ENCODE measurements at regions of chr18 and their contacts with region 1.

Region 1: GRCh38 chr18:70454704-70455322 is 166.0 kb downstream of the SOCS6 start:
- DNase-seq: peak; percentile 24
- H3K4me3 ChIP-seq: no peak overlapping the region
- CTCF ChIP-seq: peak; percentile 69

Region 2: DNA sequence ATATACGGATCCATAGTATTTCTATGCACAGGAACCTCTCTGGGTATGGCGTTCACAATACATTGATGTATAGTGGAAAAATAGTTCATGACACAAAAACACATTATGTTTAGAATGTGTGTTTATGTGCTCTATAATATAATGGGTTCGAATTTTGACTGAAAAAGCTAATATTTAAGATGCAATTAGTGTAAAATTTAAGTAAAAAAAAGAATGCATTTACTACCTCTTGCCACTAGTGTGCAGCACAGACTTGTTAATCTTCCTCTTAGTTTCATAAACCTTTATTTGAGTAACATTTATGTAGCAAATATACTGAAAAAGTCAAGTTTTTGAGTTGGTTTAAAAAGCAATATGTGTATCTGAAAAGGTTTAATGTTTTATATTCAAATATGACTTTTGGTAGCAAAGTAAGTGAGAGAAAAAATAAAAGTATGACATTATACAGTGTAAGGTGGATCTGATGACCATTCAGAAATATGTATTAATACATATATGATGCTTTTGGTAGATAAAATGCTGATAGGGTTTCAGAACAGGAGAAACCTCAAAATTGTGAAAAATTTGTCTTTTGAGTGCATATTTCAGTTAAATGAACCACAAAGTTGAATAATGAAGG is 1607.5 kb before region 1 on chr18:
- CTCF ChIA-PET with region 1: interaction called, 12 read pairs
- POLR2A ChIA-PET with region 1: no interaction called
- DNase-seq: no peak
- H3K4me3 ChIP-seq: no peak overlapping the region
- CTCF ChIP-seq: peak; percentile 47

Region 3: DNA sequence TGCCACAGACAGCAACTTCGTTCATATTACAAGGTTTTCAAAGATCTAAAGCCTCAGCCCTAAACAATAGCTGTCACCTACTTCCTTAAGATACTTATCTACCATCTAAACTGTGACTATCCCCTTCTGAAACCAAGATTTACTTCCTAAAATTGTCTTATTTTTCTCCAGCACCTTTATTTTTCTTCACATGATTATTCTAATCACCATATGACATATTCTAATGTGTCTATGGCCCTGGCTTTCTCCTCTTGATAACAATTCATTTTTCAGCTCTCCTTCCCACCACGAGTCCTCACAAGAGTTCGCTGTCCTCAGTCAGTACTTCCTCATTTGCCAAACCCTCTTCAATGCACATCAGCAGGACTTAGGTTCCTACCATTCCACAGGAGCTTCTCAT is 303.2 kb before region 1 on chr18:
- CTCF ChIA-PET with region 1: interaction called, 13 read pairs
- POLR2A ChIA-PET with region 1: no interaction called
- DNase-seq: no peak
- H3K4me3 ChIP-seq: no peak overlapping the region
- CTCF ChIP-seq: no peak

Region 4: DNA sequence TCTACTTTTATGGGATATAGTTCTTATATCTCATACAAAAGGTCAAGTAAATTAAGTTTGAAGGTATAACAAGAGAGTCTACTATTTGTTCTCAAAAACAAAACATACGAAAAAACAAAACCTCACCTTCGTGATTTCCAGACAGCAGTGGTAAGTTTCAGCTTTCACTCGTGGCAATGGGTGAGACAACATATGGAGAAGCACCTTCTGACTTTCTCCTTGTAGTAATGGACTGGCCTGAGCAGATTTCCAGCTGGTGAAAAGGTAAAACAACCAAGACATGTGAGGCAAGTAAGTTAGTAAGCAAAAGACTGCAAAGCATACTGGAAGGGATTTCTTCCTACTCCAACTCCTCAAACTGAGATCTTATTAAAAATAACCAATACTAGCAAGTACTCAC is 288.9 kb before region 1 on chr18:
- CTCF ChIA-PET with region 1: interaction called, 218 read pairs
- POLR2A ChIA-PET with region 1: no interaction called
- DNase-seq: no peak
- H3K4me3 ChIP-seq: no peak overlapping the region
- CTCF ChIP-seq: no peak

Region 5: DNA sequence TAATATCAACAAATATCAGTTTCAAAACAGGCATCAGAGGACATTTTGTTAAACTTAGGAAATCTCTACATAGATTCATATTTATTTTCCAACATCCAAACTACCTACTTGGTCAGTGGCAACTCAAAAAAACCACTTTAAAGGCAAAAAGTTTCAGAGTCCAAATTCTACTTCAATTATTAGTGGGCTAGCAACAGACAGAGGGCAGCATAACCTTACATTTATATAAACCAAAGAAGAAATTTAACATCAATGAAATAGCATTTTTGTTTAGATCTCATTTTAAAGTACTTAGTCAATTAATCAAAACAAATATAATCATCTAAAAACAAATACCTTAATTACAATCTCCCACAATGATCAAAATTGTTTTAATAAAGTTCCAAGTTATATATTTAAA is 282.6 kb before region 1 on chr18:
- CTCF ChIA-PET with region 1: interaction called, 218 read pairs
- POLR2A ChIA-PET with region 1: no interaction called
- DNase-seq: no peak
- H3K4me3 ChIP-seq: no peak overlapping the region
- CTCF ChIP-seq: peak; percentile 30

Region 6: DNA sequence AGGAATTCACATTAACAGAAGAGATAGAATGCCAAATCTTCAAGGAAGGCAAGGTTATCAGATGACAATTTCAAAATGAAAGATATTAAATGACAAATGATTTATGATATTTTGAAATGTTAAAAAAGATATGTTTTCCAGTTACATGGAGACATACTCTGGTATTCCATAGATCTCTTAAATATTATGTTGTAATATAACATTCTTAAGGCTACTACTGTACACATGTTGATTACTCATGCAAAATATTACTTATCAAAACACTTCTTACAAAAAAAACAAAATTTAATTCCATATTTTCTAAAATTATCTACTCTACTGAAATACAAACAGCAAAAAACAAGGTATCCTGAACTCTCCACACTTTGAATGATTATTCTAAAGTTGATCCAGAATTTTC is 272.3 kb before region 1 on chr18:
- CTCF ChIA-PET with region 1: interaction called, 432 read pairs
- POLR2A ChIA-PET with region 1: no interaction called
- DNase-seq: no peak
- H3K4me3 ChIP-seq: no peak overlapping the region
- CTCF ChIP-seq: no peak

Region 7: DNA sequence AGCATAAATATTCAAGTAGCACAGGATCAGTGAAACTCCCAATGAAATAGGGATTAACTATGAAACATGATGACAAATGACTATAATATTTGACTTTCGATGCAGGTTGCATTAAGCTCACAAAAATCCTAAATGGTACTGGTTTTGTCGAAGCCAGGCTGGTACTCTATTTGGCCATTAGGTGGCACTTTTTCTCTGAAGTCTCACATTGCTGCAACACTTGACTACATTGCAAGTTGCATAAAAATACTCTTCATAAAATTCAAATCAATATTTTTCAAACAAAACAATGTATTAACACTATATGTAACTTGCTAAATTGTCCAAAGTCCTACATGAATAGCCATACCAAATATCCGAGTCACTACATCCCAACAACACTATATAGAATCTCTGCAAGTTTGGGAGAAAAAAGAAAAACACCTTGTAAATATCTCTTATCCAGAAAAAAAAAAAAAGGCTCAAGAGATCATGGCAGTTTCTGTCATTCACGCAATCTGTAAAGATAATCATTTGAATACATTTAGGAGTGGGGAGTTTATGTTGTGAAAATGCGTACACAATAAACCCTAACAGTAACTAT is 258.9 kb before region 1 on chr18:
- CTCF ChIA-PET with region 1: interaction called, 432 read pairs
- POLR2A ChIA-PET with region 1: no interaction called
- DNase-seq: no peak
- H3K4me3 ChIP-seq: no peak overlapping the region
- CTCF ChIP-seq: peak; percentile 63

Region 8: DNA sequence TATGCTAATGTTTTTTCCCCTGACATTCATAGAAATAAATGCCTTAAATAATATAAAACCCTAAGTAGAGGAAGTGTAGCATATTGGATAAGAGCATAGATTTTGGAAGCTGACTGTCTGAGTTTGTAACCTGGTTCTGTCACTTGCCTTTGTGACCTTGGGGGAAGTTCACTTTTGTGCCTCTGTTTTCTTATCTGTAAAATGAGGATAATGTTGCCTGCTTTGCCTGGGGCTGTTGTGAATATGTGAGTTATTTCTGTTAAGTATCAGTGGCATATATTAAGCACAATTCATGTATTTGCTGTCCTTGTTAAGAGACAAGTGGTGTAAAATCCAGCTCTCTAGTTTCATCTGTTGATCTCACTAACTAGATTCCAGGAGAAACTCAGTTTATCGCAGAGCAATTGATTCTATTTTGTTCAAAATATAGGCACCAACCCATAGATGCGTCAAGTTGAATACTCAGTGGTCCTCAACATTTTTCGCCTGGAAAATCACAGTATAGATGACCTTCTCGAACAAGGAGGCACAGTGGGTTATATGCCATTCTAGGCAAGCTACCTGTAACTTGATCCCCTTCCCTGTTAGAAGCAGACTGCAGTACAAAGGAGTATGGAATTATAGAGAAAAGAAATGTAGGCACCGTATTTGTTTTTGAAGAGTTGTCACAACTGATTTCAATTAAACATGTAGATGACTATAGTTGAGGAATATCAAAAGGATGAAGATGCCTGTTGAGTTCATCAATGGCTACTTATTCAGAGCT is 99.0 kb before region 1 on chr18:
- CTCF ChIA-PET with region 1: no interaction called
- POLR2A ChIA-PET with region 1: no interaction called
- DNase-seq: no peak
- H3K4me3 ChIP-seq: no peak overlapping the region
- CTCF ChIP-seq: no peak

Region 9: GRCh38 chr18:70553245-70553935 is 98.6 kb after region 1 on chr18:
- CTCF ChIA-PET with region 1: no interaction called
- POLR2A ChIA-PET with region 1: no interaction called
- DNase-seq: no peak
- H3K4me3 ChIP-seq: no peak overlapping the region
- CTCF ChIP-seq: no peak

Region 10: DNA sequence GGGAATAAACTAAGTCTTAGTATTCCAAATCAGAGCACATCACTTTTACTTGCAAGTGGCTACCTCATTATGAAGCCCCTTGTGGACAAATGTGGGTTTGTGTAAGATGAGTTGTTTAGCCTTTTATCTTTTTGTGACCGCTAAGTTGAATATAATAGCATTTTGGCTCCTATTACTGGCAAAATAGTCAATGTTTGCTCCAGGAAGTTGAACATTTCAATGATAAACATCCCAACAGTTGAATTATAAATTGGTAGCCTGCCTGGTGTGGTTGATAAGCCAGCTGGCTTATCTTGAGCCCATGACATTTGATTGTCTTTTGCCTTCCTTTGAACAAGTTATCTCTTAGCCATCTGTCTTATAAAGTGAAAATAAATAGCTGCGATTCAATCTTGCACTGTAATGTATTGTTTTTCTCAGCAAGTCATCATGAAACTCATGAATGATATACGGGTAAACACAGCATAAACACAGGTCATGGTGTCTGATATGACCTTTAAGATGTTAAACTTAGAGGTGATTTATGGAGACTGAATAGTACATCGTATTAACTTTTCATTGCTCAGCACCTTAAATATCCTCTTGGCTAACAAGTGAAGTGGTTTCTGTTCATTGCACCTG is 172.5 kb after region 1 on chr18:
- CTCF ChIA-PET with region 1: no interaction called
- POLR2A ChIA-PET with region 1: no interaction called
- DNase-seq: no peak
- H3K4me3 ChIP-seq: no peak overlapping the region
- CTCF ChIP-seq: no peak

Region 11: GRCh38 chr18:70956554-70956953 is 501.7 kb after region 1 on chr18:
- CTCF ChIA-PET with region 1: no interaction called
- POLR2A ChIA-PET with region 1: no interaction called
- DNase-seq: no peak
- H3K4me3 ChIP-seq: no peak overlapping the region
- CTCF ChIP-seq: no peak